Right lobe of liver (tissue), 6 donors: ENCODE measurements at regions of chr19 and their contacts with region 1.

Region 1: GRCh38 chr19:16572332-16573211 is at the start of gene SLC35E1:
- DNase-seq: peak; percentile 96 to 98 (median 98)
- ATAC-seq: peak; percentile 92 to 96 (median 94)
- H3K4me3 ChIP-seq: peak within 1 kb of the TSS; percentile 84 to 94 (median 92)
- H3K27ac ChIP-seq: peak within 1 kb of the TSS; percentile 63 to 86 (median 69)
- H3K4me1 ChIP-seq: peaks cover 0 to 38% (median 17%) of the 10 kb centered on the region in 4 donors
- H3K27me3 ChIP-seq: no peaks in the 10 kb centered on the region
- CTCF ChIP-seq: no peak
- POLR2A ChIP-seq: peak; percentile 88
- total RNA-seq, gene SLC35E1: 17.2 to 27.4 (median 20.1) TPM

Region 2: DNA sequence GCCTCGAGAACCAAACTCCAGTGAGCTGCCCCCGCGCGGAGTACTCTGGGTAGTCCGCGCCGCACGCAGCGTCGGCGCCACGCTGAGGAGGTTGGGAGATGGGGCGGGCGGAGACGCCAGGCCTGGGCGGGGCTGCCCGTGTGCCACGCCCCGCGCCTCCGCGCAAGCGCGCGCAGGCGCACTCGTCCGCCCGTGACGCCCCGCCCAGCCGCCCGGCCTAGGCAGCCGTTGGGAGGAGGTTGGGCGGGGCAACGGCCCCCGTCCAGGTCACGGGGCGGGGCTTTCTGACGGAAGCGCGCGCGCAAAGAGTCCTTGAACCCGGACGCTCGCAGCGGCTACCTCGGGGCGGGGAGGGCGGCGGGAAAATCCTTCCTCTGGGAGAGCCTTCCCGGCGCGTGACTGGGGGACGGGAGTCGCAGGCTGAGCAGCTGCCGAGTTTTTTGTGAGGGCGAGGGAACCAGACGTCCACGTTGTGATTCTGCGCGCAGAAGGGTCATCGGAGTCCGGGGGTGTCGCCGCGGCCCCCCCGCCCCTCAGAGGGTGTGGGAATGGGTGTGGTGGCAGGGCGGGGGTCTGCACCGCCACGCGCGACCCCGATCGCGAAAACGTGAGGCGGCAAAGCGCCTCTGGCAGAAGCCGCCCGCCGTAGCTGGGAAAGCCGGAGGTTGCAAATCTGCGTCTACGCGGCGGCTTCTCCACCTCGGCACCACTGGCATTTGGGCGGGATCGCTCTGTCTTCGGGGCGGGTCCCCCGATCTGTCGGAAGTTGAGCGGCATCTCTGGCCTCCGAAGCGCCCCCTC is 55.8 kb after region 1 on chr19 and contains the start of gene MED26:
- intact Hi-C with region 1: loop called in 1 of 2 experiments (anchors 5 kb)
- DNase-seq: peak; percentile 97 to 98 (median 98)
- ATAC-seq: peak; percentile 90 to 95 (median 92)
- H3K4me3 ChIP-seq: peak within 1 kb of the TSS; percentile 92 to 97 (median 95)
- H3K27ac ChIP-seq: peak within 1 kb of the TSS; percentile 86 to 90 (median 88)
- H3K4me1 ChIP-seq: peaks cover 0 to 35% (median 13%) of the 10 kb centered on the region in 4 donors
- H3K27me3 ChIP-seq: no peaks in the 10 kb centered on the region
- CTCF ChIP-seq: peak in 3 of 4 donors; percentile 4 to 27 (median 16)
- POLR2A ChIP-seq: peak; percentile 78
- total RNA-seq, gene MED26: 3.4 to 5.4 (median 4.4) TPM